ENCODE measurements at regions of chr7 and their contacts with region 1.

Region 1: GRCh38 chr7:37342688-37343471 is 105.8 kb downstream of the ELMO1 start:
- DNase-seq: peak; percentile 62
- H3K4me3 Mint-ChIP-seq: peak overlapping the region; percentile 96
- H3K27ac Mint-ChIP-seq: peak overlapping the region; percentile 99
- H3K4me1 Mint-ChIP-seq: peaks cover 76% of the 10 kb centered on the region
- H3K27me3 Mint-ChIP-seq: no peaks in the 10 kb centered on the region

Region 2: DNA sequence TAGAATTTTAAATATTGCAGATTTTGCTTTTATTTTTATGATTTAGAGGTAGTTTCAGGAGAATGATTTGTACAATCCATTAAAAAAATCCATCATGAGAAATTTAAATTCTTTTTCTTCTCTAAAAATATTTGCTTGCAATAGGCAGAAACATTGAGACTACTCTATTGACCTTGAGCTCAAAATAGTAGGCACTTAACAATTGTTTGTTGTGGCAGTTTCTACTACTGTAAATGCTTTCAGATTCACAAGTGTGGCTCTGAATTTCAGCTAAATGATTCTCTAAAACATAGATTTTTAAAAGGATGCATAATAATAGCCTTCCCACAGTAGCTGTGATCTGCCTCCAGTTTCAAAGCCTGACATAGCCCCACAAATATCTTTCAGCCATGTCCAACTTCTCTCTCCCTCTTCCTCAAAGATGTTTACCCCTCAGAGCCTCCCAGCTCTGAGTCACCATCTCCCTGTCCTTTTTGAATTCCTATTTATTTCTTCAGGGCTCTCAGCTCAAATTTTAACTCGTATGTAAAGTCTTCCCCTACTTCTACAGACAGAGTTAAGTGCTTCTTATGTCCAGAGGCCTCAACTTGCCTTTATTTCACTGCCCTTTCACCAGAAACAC is 779.1 kb before region 1 on chr7:
- intact Hi-C with region 1: no loop called
- DNase-seq: no peak
- H3K4me3 Mint-ChIP-seq: no peak overlapping the region
- H3K27ac Mint-ChIP-seq: no peak overlapping the region
- H3K4me1 Mint-ChIP-seq: peaks cover 13% of the 10 kb centered on the region
- H3K27me3 Mint-ChIP-seq: no peaks in the 10 kb centered on the region

Region 3: GRCh38 chr7:37031571-37032257 is 311.2 kb before region 1 on chr7:
- intact Hi-C with region 1: loop called (anchors 5 kb)
- DNase-seq: peak; percentile 19
- H3K4me3 Mint-ChIP-seq: no peak overlapping the region
- H3K27ac Mint-ChIP-seq: peak overlapping the region; percentile 69
- H3K4me1 Mint-ChIP-seq: peaks cover 59% of the 10 kb centered on the region
- H3K27me3 Mint-ChIP-seq: no peaks in the 10 kb centered on the region

Region 4: GRCh38 chr7:37311355-37311754 is 31.5 kb before region 1 on chr7:
- intact Hi-C with region 1: loop called (anchors 1 kb)
- DNase-seq: no peak
- H3K4me3 Mint-ChIP-seq: peak overlapping the region; percentile 9
- H3K27ac Mint-ChIP-seq: peak overlapping the region; percentile 87
- H3K4me1 Mint-ChIP-seq: peaks cover 54% of the 10 kb centered on the region
- H3K27me3 Mint-ChIP-seq: no peaks in the 10 kb centered on the region

Region 5: DNA sequence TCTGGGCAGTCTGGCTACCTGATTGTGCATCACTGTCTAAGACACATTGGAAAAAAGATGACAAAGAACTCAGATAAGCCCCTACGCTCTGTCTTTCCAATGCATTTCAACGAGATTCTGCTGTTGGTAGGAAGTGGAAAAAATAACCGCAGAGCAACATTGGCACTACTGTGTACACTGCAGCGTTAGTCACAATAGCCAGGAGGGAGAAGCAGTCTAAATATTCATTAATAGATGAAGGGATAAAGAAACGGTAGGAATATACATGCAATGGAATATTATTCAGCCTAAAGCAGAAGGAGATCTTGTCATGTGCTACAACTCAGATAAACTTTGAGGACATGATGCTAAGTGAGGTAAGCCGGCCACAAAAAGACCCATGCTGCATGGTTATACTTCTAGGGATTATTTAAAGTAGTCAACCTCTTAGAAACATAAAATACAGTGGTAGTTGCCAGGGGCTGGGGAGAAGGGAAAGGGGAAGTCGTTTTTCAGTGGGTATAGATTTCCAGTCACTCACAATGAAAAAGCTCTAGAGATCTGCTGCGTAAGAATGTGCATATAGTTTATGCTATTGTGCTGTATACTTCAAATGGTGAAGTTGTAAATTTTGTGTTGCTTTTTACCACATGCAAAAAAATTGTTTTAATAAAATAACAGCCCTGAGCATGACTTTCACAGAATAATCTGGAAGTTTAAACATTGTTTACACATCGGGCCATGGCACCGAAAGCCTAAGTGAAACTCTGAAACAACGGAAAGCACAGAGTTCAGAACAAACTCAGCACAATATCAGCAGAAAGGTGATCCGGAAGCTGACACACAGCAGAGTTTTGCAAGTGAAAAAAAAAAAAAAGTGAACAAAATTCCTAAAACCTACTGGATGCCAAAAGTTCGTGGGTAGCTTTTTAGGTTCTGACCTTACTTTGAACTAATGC is 65.7 kb after region 1 on chr7:
- intact Hi-C with region 1: loop called (anchors 1 kb)
- DNase-seq: no peak
- H3K4me3 Mint-ChIP-seq: peak overlapping the region; percentile 83
- H3K27ac Mint-ChIP-seq: peak overlapping the region; percentile 96
- H3K4me1 Mint-ChIP-seq: peaks cover 78% of the 10 kb centered on the region
- H3K27me3 Mint-ChIP-seq: no peaks in the 10 kb centered on the region

Measured in activated T-helper 1 cell treated with anti-CD3 and anti-CD28 coated beads, Interleukin-12 subunit alpha, Interleukin-12 subunit beta, Interleukin-2, Interleukin-4 antibody, amounts not matched to agents 30 ng/mL and 10 ng/mL and 1 ng/mL, durations not matched to agents 14 hours and 24 hours and 36 hours (primary cell).